SK-N-SH (cell line): ENCODE measurements at regions of chr7 and their contacts with region 1.

Region 1: GRCh38 chr7:28921822-28922221 is 36.3 kb downstream of the TRIL start:
- DNase-seq: peak; percentile 84
- H3K4me3 ChIP-seq: peak overlapping the region in 1 of 2 experiments; percentile 6; a peak in 1 of 4 replicates
- H3K27ac ChIP-seq: peak overlapping the region in 1 of 2 experiments; percentile 93; a peak in 2 of 4 replicates
- H3K4me1 ChIP-seq: peaks cover 0 to 13% of the 10 kb centered on the region in 2 experiments; a peak in 3 of 4 replicates
- H3K27me3 ChIP-seq: 0 out of 2 replicates have a peak, but pooled peaks cover 15% of the 10 kb centered on the region
- CTCF ChIP-seq: peak; percentile 97
- EP300 ChIP-seq: peak in 1 of 2 experiments; percentile 77; a peak in 2 of 4 replicates
- RAD21 ChIP-seq: peak; percentile 87

Region 2: DNA sequence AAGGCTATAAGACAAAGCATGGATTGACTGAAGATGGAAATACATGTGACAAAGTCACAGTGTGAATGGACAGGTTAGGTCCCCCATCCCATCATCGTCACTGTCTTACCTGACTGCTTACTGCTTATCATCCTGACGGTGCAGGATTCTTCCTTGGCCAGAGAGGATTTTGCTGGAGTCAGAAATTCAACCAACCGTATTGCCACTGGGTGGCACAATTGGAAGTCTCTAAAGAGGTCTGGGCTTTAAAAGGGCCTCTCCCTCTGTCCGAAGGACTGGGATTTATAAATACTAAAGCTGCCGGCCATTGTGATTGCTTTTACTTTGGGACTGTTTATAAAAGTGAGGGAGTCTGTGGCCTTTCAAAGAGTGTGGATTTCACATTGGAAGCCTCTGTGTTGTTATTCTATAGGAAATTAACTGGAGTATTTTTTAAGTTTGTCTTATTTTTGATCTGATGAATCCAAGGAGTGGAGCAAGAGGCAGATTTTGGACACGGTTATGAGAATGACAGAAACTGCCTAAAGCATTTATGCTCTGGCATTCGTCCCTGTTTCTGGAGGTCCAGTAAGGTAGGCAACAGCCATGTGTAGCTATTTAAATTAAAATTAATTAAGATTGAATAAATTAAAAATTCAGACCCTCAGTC is 622.8 kb before region 1 on chr7:
- CTCF ChIA-PET with region 1: interaction called, 11 read pairs
- POLR2A ChIA-PET with region 1: no interaction called
- DNase-seq: peak; percentile 77
- H3K4me3 ChIP-seq: no peak overlapping the region
- H3K27ac ChIP-seq: no peak overlapping the region
- H3K4me1 ChIP-seq: no peaks in the 10 kb centered on the region; a peak in 2 of 4 replicates
- H3K27me3 ChIP-seq: no peaks in the 10 kb centered on the region; the same call in 1 of the 2 replicates
- CTCF ChIP-seq: peak; percentile 79
- EP300 ChIP-seq: no peak
- RAD21 ChIP-seq: peak; percentile 99

Region 3: GRCh38 chr7:28414453-28414852 is 507.4 kb before region 1 on chr7:
- CTCF ChIA-PET with region 1: no interaction called
- POLR2A ChIA-PET with region 1: no interaction called
- DNase-seq: no peak
- H3K4me3 ChIP-seq: no peak overlapping the region
- H3K27ac ChIP-seq: no peak overlapping the region
- H3K4me1 ChIP-seq: peaks cover 3 to 18% of the 10 kb centered on the region in 2 experiments; a peak in 2 of 4 replicates
- H3K27me3 ChIP-seq: no peaks in the 10 kb centered on the region; the same call in 1 of the 2 replicates
- CTCF ChIP-seq: no peak
- EP300 ChIP-seq: no peak
- RAD21 ChIP-seq: no peak

Region 4: GRCh38 chr7:28738412-28738811 is 183.4 kb before region 1 on chr7:
- CTCF ChIA-PET with region 1: no interaction called
- POLR2A ChIA-PET with region 1: no interaction called
- DNase-seq: no peak
- H3K4me3 ChIP-seq: no peak overlapping the region
- H3K27ac ChIP-seq: no peak overlapping the region
- H3K4me1 ChIP-seq: peaks cover 0 to 2% of the 10 kb centered on the region in 2 experiments; a peak in 1 of 4 replicates
- H3K27me3 ChIP-seq: no peaks in the 10 kb centered on the region
- CTCF ChIP-seq: no peak
- EP300 ChIP-seq: no peak
- RAD21 ChIP-seq: no peak

Region 5: GRCh38 chr7:28933846-28934320 is 12.1 kb after region 1 on chr7:
- CTCF ChIA-PET with region 1: interaction called, 1,040 read pairs
- POLR2A ChIA-PET with region 1: interaction called, 3 read pairs
- DNase-seq: no peak
- H3K4me3 ChIP-seq: no peak overlapping the region
- H3K27ac ChIP-seq: peak overlapping the region in 1 of 2 experiments; percentile 19; a peak in 1 of 4 replicates
- H3K4me1 ChIP-seq: peaks cover 0 to 33% of the 10 kb centered on the region in 2 experiments; a peak in 2 of 4 replicates
- H3K27me3 ChIP-seq: no peaks in the 10 kb centered on the region
- CTCF ChIP-seq: no peak
- EP300 ChIP-seq: no peak
- RAD21 ChIP-seq: no peak

Region 6: DNA sequence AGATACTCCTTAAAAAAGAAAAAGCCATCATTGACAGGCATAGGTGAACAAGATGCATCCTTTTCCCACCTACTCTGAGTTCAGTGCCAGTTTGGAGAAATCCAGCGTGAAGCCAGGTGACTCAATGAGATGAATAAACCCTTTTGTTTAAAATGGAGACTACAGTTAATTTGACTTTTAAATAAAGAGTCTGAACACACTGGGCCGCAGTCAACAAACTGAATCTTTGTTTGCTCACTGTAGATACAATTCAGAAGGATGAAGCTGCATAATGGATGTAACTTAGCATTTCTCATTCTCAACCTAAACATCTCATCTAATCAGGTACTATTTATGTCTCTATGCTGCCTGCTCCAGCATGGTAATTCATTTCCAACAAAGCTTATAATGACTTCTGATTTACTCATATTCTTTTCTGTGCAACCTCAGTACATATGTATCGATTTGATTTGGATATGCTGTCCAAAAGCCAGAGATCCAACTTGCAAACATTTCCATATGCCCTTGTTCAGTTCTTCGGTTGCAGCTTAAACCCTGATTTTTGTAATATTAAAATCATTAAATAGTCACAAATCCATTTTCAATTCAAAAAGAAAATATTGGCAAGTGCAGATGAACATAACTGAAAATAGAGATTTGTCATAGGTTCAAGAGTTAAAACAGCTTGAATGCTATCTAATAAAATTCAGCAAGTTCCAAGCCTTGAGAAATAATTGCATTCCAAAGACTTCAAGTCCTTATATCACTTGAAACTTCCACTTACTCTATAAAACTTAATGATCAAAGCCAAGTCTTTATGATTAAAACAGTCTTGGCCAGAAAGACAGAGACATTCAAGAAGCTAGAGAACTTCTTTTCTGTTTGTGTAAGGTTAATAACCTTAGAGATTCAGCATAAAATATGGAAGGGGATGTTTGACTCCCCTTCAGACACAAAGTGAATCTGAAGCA is 156.8 kb after region 1 on chr7:
- CTCF ChIA-PET with region 1: interaction called, 23 read pairs
- POLR2A ChIA-PET with region 1: no interaction called
- DNase-seq: no peak
- H3K4me3 ChIP-seq: no peak overlapping the region
- H3K27ac ChIP-seq: peak overlapping the region in 1 of 2 experiments; percentile 36; a peak in 1 of 4 replicates
- H3K4me1 ChIP-seq: peaks cover 0 to 10% of the 10 kb centered on the region in 2 experiments; a peak in 2 of 4 replicates
- H3K27me3 ChIP-seq: no peaks in the 10 kb centered on the region
- CTCF ChIP-seq: no peak
- EP300 ChIP-seq: no peak
- RAD21 ChIP-seq: no peak

Region 7: GRCh38 chr7:29194594-29195427 is 273.0 kb after region 1 on chr7 and contains the start of gene CHN2:
- CTCF ChIA-PET with region 1: interaction called, 113 read pairs
- POLR2A ChIA-PET with region 1: no interaction called
- DNase-seq: peak; percentile 90
- H3K4me3 ChIP-seq: peak within 1 kb of the TSS; percentile 59 to 61
- H3K27ac ChIP-seq: no peak within 1 kb of the TSS; a peak in 1 of 4 replicates
- H3K4me1 ChIP-seq: peaks cover 0 to 7% of the 10 kb centered on the region in 2 experiments; a peak in 2 of 4 replicates
- H3K27me3 ChIP-seq: peaks cover 48% of the 10 kb centered on the region
- CTCF ChIP-seq: no peak
- EP300 ChIP-seq: no peak
- RAD21 ChIP-seq: 0 out of 2 replicates have a peak, but pooled peaks have one; percentile 13
- polyA plus RNA-seq, gene CHN2: 0.02 TPM in 1 of 2 replicates, not detected in the other

Region 8: GRCh38 chr7:29386196-29386765 is 464.5 kb after region 1 on chr7:
- CTCF ChIA-PET with region 1: interaction called, 19 read pairs
- POLR2A ChIA-PET with region 1: no interaction called
- DNase-seq: no peak
- H3K4me3 ChIP-seq: no peak overlapping the region
- H3K27ac ChIP-seq: no peak overlapping the region
- H3K4me1 ChIP-seq: peaks cover 0 to 8% of the 10 kb centered on the region in 2 experiments; a peak in 1 of 4 replicates
- H3K27me3 ChIP-seq: peaks cover 11% of the 10 kb centered on the region; the same call in 1 of the 2 replicates
- CTCF ChIP-seq: no peak
- EP300 ChIP-seq: no peak
- RAD21 ChIP-seq: no peak